Mammary epithelial cell (primary cell): ENCODE measurements at regions of chr2 and their contacts with region 1.

Region 1: GRCh38 chr2:221969087-221969829 is 329.5 kb downstream of the PAX3 start:
- DNase-seq: peak; percentile 23
- H3K4me3 ChIP-seq: no peak overlapping the region
- H3K27ac ChIP-seq: no peak overlapping the region
- H3K4me1 ChIP-seq: no peaks in the 10 kb centered on the region
- H3K27me3 ChIP-seq: no peaks in the 10 kb centered on the region
- CTCF ChIP-seq: peak; percentile 73 to 75

Region 2: DNA sequence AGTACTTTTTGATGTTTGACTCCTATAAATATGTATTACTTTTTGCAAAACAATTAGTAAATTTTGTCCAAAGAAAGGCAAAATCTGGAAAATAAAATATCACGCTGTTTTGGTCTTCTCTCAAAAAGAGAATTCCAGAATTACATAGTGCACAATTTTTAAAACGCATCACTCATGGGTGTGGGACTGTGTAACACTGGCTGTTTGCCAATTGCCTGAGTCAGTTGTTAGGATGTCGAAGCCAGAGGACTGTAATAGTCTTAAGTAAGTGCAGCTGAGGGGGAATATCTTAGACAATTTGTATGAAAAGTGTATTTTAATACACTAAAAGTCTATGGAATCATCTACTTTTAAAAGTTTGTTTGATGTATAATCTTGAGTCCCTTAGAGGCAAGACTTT is 373.1 kb before region 1 on chr2:
- CTCF ChIA-PET with region 1: no interaction called
- dilution Hi-C with region 1: no loop called
- in situ Hi-C with region 1: loop called (anchors 25 kb)
- intact Hi-C with region 1: no loop called
- DNase-seq: peak; percentile 57
- H3K4me3 ChIP-seq: no peak overlapping the region
- H3K27ac ChIP-seq: no peak overlapping the region
- H3K4me1 ChIP-seq: no peaks in the 10 kb centered on the region
- H3K27me3 ChIP-seq: no peaks in the 10 kb centered on the region
- CTCF ChIP-seq: no peak

Region 3: DNA sequence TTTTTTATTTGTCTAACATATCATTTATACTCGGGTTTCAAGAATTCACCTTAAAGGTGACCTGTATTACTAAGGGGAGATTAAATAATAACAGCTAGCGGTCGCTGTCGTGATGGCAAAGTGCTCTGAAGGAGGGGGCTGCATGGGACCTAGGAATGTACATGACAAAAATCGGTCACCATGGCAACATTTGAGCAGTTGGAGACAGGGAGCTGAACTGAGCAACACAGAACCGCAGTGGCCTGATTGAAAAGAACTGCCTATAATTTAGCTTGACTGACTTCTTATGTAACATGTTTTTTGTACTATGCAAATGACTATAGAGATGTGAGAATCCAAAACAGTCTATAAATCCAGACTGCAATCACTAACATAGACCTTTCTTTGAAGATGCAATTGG is 362.8 kb before region 1 on chr2:
- CTCF ChIA-PET with region 1: no interaction called
- dilution Hi-C with region 1: no loop called
- in situ Hi-C with region 1: loop called in 1 of 2 experiments (anchors 25 kb)
- intact Hi-C with region 1: no loop called
- DNase-seq: no peak
- H3K4me3 ChIP-seq: no peak overlapping the region
- H3K27ac ChIP-seq: no peak overlapping the region
- H3K4me1 ChIP-seq: no peaks in the 10 kb centered on the region
- H3K27me3 ChIP-seq: no peaks in the 10 kb centered on the region
- CTCF ChIP-seq: no peak